Posterior cingulate gyrus (tissue), 11 donors: ENCODE measurements at regions of chr12 and their contacts with region 1.

Region 1: DNA sequence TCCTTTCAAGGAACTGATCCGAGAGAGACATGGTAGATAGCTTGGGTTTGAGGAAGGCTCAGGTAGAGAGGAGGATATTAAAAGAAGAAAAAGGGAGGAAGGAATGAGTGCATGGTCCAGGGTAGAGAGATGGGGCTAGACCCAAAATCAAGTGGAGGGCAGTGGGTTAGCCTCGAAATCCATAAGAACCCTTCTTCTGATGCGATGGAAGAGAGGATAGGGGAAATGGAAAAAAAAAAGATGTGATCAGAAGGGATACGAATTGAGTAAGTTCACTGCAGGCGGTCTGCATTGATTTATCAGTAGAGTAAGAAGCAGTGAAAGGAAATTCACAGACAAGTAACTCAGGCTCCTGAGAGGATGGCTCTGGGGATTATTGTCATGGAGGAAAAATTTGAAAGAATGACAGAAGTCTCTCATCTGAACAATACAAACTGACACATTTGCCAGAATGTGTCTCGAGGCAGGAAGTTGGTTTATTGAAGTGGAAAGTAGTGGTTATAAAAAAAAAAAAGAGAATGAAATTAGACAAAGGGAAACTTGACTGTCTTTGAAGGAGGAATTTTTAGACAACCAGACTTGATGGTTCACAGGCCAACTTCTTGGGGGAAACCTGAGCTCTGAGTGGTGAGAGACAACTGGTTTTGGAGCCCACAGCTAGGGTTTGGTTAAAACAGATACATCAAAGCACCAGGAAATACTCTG is 10.2 kb downstream of the PPFIBP1 start:
- DNase-seq: no peak

Region 2: DNA sequence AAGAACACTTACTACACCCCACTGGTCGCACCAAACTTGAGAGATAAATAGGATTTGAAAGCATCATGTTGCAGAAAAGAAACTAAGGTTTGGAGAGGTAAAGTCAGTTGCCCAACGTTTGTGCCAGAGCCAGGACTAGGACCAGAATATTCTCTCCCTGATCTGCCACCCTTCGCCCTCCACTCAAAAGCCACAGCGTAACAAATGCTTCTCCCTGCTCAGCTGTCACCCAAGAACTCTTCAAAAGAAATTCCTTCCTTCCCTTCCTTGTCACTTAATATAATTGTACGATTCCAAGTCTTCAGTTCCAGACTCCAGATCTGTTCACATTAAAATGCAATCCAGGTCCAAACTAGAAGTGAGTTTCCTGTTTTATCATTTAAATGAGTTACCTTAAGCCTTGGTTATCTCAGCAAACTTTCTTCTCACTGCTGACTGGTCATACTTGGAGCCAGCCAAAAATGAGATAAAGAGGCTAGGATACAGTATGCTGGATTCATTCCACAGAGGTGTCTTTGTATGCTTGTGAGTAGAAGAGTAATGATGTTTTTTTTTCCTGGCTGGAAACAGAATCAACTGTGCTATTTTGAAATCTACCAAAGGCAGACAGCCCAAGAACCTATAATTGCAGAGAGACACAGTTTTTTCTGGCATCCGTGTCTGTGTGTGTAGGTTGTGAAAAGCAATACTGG is 23.0 kb before region 1 on chr12:
- intact Hi-C with region 1: no loop called
- DNase-seq: no peak

Region 3: GRCh38 chr12:27635349-27635972 is 101.2 kb after region 1 on chr12:
- intact Hi-C with region 1: loop called (anchors 1 kb)
- DNase-seq: no peak

Region 4: DNA sequence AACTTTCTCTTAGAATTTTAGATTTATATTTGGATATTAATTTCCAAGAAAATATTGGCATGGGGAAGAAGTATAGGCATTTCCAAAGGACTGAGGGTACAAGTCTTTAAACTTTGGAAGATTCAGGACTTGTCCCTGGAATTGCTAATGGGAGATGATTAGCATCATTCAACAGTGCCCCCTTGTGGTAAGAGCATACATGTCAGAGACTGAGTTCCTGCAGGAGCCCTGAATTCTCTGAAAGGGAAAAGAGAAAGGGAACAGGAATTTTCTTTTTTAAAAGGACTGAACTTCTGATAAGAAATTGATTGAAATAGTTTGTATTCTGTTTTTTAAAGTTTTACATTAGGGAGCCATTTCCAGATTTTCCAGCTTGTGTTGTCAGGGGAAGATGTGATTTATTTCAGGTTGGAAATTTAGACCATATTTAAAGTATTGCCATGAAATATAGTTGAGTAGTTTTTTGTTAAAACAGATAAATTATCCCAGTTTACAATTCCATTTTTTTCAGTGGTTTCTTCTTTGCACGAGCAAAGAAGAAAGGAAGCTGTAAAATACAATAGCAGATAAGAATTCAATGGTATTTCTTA is 118.1 kb after region 1 on chr12:
- intact Hi-C with region 1: loop called (anchors 5 kb)
- DNase-seq: peak in 3 of 10 donors; percentile 33 to 59 (median 46)